RWPE1 (cell line): ENCODE measurements at regions of chr5 and their contacts with region 1.

Region 1: GRCh38 chr5:145908205-145908945 is 28.0 kb upstream of the SH3RF2 start:
- DNase-seq: peak; percentile 31
- H3K27ac ChIP-seq: no peak overlapping the region
- CTCF ChIP-seq: no peak

Region 2: GRCh38 chr5:145931718-145932117 is 23.3 kb after region 1 on chr5:
- CTCF ChIA-PET with region 1: no interaction called
- POLR2A ChIA-PET with region 1: no interaction called
- DNase-seq: no peak
- H3K27ac ChIP-seq: no peak overlapping the region
- CTCF ChIP-seq: no peak

Region 3: DNA sequence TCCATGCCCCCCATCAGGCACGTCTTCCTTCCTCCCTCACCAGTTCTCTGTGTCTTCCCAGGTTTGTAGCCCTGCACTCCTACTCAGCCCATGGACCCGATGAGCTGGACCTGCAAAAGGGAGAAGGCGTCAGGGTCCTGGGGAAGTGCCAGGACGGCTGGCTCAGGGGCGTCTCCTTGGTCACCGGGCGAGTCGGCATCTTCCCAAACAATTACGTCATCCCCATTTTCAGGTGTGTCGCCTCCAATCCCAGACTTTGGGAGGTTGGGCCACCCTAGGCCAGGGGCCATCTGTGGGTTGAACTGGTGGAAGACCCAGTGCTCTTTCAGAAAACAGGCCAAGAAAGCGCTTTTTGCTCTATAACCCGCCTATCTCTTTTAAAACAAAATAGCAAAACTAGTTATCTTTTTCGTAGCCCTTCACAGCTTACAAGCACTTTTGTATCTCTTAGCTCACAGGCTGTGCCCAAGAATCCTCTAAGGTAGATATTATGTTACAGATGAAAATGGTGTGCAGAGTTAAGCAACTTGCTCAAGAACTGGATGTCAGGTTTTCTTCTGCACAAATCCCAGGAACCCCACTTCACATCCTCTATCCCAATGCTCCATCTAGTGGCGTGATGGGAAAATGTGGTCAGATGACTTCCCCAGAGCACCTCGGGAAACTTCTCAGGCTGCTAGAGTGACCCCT is 140.8 kb after region 1 on chr5:
- CTCF ChIA-PET with region 1: interaction called, 13 read pairs
- POLR2A ChIA-PET with region 1: no interaction called
- DNase-seq: peak; percentile 92
- H3K27ac ChIP-seq: peak overlapping the region; percentile 56
- CTCF ChIP-seq: peak; percentile 82